ENCODE measurements at regions of chr19 and their contacts with region 1.

Region 1: GRCh38 chr19:49712397-49712859 is 21.5 kb downstream of the CPT1C start:
- DNase-seq: peak; percentile 76
- H3K4me3 ChIP-seq: no peak overlapping the region
- H3K27ac ChIP-seq: no peak overlapping the region
- H3K4me1 ChIP-seq: no peaks in the 10 kb centered on the region
- H3K27me3 ChIP-seq: no peaks in the 10 kb centered on the region
- CTCF ChIP-seq: no peak

Region 2: DNA sequence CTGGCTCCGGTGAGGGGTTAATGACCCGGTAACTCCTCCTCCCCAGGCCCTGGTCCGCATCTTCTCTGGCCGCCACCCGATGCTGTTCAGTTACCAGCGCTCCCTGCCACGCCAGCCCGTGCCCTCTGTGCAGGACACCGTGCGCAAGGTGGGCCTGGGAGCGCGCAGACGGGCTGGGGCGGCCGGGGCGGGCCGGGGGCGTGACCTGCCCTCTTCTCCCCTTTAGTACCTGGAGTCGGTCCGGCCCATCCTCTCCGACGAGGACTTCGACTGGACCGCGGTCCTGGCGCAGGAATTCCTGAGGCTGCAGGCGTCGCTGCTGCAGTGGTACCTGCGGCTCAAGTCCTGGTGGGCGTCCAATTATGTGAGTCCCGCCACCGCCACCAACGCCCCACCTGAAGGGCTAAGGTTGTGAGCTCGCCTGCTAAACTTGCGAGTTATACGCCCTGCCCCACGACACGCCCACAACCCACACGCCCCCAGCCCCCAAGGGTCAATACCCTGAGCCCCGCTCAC is 11.1 kb before region 1 on chr19:
- CTCF ChIA-PET with region 1: no interaction called
- POLR2A ChIA-PET with region 1: no interaction called
- intact Hi-C with region 1: no loop called
- DNase-seq: no peak
- H3K4me3 ChIP-seq: no peak overlapping the region
- H3K27ac ChIP-seq: no peak overlapping the region
- H3K4me1 ChIP-seq: no peaks in the 10 kb centered on the region
- H3K27me3 ChIP-seq: no peaks in the 10 kb centered on the region
- CTCF ChIP-seq: no peak

Region 3: GRCh38 chr19:49896863-49897621 is 184.6 kb after region 1 on chr19 and contains the start of gene IL4I1:
- CTCF ChIA-PET with region 1: interaction called, 10 read pairs
- POLR2A ChIA-PET with region 1: no interaction called
- intact Hi-C with region 1: no loop called
- DNase-seq: no peak
- H3K4me3 ChIP-seq: no peak within 1 kb of the TSS
- H3K27ac ChIP-seq: no peak within 1 kb of the TSS
- H3K4me1 ChIP-seq: no peaks in the 10 kb centered on the region
- H3K27me3 ChIP-seq: no peaks in the 10 kb centered on the region
- CTCF ChIP-seq: no peak
- total RNA-seq, gene IL4I1: 1.3 TPM in 2 replicates

Measured in A673 (cell line).